Heart right ventricle (tissue), 16 donors: ENCODE measurements at regions of chr7 and their contacts with region 1.

Region 1: GRCh38 chr7:127717502-127718339 is 65.7 kb downstream of the SND1 start:
- DNase-seq: no peak
- ATAC-seq: no peak
- H3K4me3 ChIP-seq: no peak overlapping the region
- H3K27ac ChIP-seq: no peak overlapping the region
- H3K4me1 ChIP-seq: peaks cover 0 to 6% (median 0%) of the 10 kb centered on the region in 9 donors
- H3K27me3 ChIP-seq: no peaks in the 10 kb centered on the region
- CTCF ChIP-seq: no peak

Region 2: DNA sequence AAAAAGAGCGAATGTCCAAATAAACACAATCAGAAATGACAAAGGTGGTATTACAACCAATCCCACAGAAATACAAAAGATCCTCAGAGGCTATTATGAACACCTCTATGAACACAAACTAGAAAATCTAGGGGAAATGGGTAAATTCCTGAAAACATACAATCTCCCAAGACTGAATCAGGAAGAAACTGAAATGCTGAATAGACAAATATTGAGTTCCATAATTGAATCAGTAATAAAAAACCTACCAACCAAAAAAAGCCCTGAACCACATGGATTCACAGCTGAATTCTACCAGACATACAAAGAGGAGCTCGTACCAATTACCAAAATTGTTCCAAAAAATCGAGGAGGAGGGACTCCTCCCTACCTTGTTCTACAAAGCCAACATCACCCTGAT is 269.2 kb before region 1 on chr7:
- intact Hi-C with region 1: no loop called
- DNase-seq: no peak
- ATAC-seq: no peak
- H3K4me3 ChIP-seq: no peak overlapping the region
- H3K27ac ChIP-seq: no peak overlapping the region
- H3K4me1 ChIP-seq: no peaks in the 10 kb centered on the region
- H3K27me3 ChIP-seq: peaks cover 0 to 30% (median 5%) of the 10 kb centered on the region in 7 donors
- CTCF ChIP-seq: no peak

Region 3: GRCh38 chr7:128031901-128032604 is 314.3 kb after region 1 on chr7:
- intact Hi-C with region 1: loop called in 2 of 10 experiments (anchors 10 kb)
- DNase-seq: peak; percentile 51
- ATAC-seq: peak; percentile 59 to 84 (median 68)
- H3K4me3 ChIP-seq: peak overlapping the region; percentile 25 to 71 (median 60)
- H3K27ac ChIP-seq: peak overlapping the region in 7 of 10 donors; percentile 30 to 77 (median 50)
- H3K4me1 ChIP-seq: peaks cover 3 to 32% (median 18%) of the 10 kb centered on the region in 9 donors
- H3K27me3 ChIP-seq: no peaks in the 10 kb centered on the region
- CTCF ChIP-seq: peak in 5 of 9 donors; percentile 10 to 46 (median 45)

Region 4: GRCh38 chr7:128135515-128136214 is 417.9 kb after region 1 on chr7:
- intact Hi-C with region 1: loop called in 1 of 10 experiments (anchors 10 kb)
- DNase-seq: peak; percentile 34 to 51
- ATAC-seq: peak; percentile 83 to 96 (median 90)
- H3K4me3 ChIP-seq: peak overlapping the region; percentile 9 to 66 (median 59)
- H3K27ac ChIP-seq: no peak overlapping the region
- H3K4me1 ChIP-seq: peaks cover 4 to 39% (median 15%) of the 10 kb centered on the region in 9 donors
- H3K27me3 ChIP-seq: peaks cover 0 to 80% (median 55%) of the 10 kb centered on the region in 7 donors
- CTCF ChIP-seq: peak; percentile 71 to 100 (median 93)